ENCODE measurements at regions of chrX and their contacts with region 1.

Region 1: GRCh38 chrX:74614093-74614909 is at the start of gene RLIM:
- DNase-seq: peak; percentile 94
- ATAC-seq: peak; percentile 94
- H3K4me3 Mint-ChIP-seq: peak within 1 kb of the TSS; percentile 97
- H3K27ac Mint-ChIP-seq: peak within 1 kb of the TSS; percentile 99
- H3K4me1 Mint-ChIP-seq: peaks cover 8% of the 10 kb centered on the region
- H3K27me3 Mint-ChIP-seq: no peaks in the 10 kb centered on the region
- total RNA-seq, gene RLIM: 36.5 to 38.2 TPM

Region 2: DNA sequence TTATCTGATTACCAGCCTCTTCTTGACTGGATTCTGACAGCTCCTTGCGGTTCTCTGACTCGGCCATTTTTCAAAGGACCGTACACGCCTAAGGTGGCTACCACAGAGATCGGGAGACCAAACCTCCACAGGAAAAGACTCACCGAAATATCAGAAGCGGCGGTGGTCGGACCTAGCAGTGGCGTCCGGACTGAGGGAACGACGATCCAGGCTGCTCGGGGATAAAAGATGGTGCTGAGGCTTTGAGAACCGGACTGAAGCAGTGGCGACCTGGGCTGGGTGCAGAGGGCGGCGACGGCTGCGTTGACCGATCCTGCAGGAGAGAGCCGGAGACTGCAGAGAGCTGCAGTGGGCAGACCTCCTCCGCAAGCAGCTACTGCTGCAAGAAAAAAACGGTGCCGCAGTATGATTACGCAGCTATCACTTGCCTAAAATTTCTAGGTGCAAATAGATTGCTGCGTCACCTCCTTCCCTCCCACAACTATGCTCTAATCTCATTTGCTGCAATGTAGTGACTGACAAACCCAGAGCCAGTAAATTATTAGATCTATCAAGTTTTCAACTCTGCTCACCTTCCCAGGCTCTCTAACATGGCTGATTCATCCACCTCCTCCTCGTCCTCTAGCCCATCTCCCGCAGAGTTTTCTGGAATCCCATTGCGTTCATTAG is 1399.7 kb before region 1 on chrX and contains the start of gene NAP1L2:
- CTCF ChIA-PET with region 1: no interaction called
- POLR2A ChIA-PET with region 1: no interaction called
- intact Hi-C with region 1: loop called in 1 of 2 experiments (anchors 10 kb)
- DNase-seq: peak; percentile 62
- ATAC-seq: peak; percentile 91
- H3K4me3 Mint-ChIP-seq: peak within 1 kb of the TSS; percentile 92
- H3K27ac Mint-ChIP-seq: peak within 1 kb of the TSS; percentile 89
- H3K4me1 Mint-ChIP-seq: peaks cover 17% of the 10 kb centered on the region
- H3K27me3 Mint-ChIP-seq: peaks cover 2% of the 10 kb centered on the region
- total RNA-seq, gene NAP1L2: 1.9 to 2.9 TPM

Region 3: DNA sequence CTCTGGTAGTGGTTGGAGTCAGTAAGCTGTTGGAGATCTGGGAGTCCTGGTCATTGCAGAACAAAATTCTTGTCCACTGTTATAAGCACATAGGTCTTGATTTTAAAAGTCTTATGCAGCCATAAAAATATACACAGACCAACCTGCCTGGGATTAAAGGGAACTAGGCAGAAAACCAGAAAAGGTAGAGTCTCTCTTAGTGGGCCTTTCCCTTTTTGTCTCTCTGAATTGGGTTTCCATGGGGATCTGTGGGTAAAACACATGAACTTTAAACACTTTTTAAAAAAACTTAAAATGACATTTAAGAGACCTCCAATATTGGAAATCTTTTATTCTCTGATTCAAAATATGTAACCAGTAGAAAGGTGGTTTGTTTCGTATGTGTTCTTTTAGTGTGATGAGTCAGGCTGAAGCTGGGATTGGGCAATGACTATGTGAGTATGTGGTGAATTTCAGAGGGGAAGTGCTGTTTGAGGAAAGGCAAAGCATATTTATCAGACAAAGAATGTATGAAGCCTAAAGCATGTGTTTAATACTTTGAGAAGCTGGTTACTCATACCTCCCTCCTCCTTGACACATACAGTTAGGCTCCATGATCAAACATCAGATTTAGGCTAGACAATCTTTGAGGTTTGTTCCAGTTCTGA is 163.4 kb before region 1 on chrX:
- CTCF ChIA-PET with region 1: no interaction called
- POLR2A ChIA-PET with region 1: no interaction called
- intact Hi-C with region 1: loop called in 1 of 2 experiments (anchors 5 kb)
- DNase-seq: peak; percentile 41
- ATAC-seq: peak; percentile 92
- H3K4me3 Mint-ChIP-seq: no peak overlapping the region
- H3K27ac Mint-ChIP-seq: peak overlapping the region; percentile 65
- H3K4me1 Mint-ChIP-seq: peaks cover 28% of the 10 kb centered on the region
- H3K27me3 Mint-ChIP-seq: no peaks in the 10 kb centered on the region

Region 4: GRCh38 chrX:74579597-74580198 is 34.6 kb before region 1 on chrX:
- CTCF ChIA-PET with region 1: no interaction called
- POLR2A ChIA-PET with region 1: interaction called, 3 read pairs
- intact Hi-C with region 1: loop called in 1 of 2 experiments (anchors 1 kb)
- DNase-seq: no peak
- ATAC-seq: no peak
- H3K4me3 Mint-ChIP-seq: no peak overlapping the region
- H3K27ac Mint-ChIP-seq: peak overlapping the region; percentile 81
- H3K4me1 Mint-ChIP-seq: peaks cover 16% of the 10 kb centered on the region
- H3K27me3 Mint-ChIP-seq: no peaks in the 10 kb centered on the region

Region 5: GRCh38 chrX:74593593-74593992 is 20.7 kb before region 1 on chrX:
- CTCF ChIA-PET with region 1: no interaction called
- POLR2A ChIA-PET with region 1: no interaction called
- intact Hi-C with region 1: no loop called
- DNase-seq: no peak
- ATAC-seq: no peak
- H3K4me3 Mint-ChIP-seq: no peak overlapping the region
- H3K27ac Mint-ChIP-seq: no peak overlapping the region
- H3K4me1 Mint-ChIP-seq: peaks cover 3% of the 10 kb centered on the region
- H3K27me3 Mint-ChIP-seq: no peaks in the 10 kb centered on the region

Region 6: GRCh38 chrX:74924449-74925225 is 310.3 kb after region 1 on chrX:
- CTCF ChIA-PET with region 1: no interaction called
- POLR2A ChIA-PET with region 1: no interaction called
- intact Hi-C with region 1: loop called in 1 of 2 experiments (anchors 10 kb)
- DNase-seq: peak; percentile 60
- ATAC-seq: peak; percentile 72
- H3K4me3 Mint-ChIP-seq: peak overlapping the region; percentile 70
- H3K27ac Mint-ChIP-seq: peak overlapping the region; percentile 40
- H3K4me1 Mint-ChIP-seq: peaks cover 6% of the 10 kb centered on the region
- H3K27me3 Mint-ChIP-seq: peaks cover 15% of the 10 kb centered on the region

Region 7: DNA sequence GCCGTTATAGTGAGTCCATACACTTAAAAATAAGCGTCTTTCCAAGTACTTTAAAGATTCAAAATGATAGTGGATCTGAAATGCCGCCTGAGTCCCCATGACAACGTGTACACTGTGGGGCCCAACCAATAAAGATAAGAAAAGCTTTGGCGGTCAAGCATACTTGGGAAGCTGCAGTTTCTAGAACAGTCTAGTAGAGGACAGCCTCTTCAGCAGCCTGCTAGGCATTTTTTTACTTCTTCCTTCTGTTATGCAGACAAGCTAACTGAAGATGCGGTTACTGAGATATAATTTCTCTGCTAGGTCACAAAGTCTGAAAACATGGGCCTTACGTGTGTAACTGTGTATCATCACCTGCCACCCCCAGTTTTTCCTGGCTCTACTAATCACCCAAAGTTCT is 659.2 kb after region 1 on chrX:
- CTCF ChIA-PET with region 1: interaction called, 4 read pairs
- POLR2A ChIA-PET with region 1: no interaction called
- intact Hi-C with region 1: loop called in 1 of 2 experiments (anchors 1 kb)
- DNase-seq: no peak
- ATAC-seq: no peak
- H3K4me3 Mint-ChIP-seq: peak overlapping the region; percentile 95
- H3K27ac Mint-ChIP-seq: peak overlapping the region; percentile 97
- H3K4me1 Mint-ChIP-seq: peaks cover 26% of the 10 kb centered on the region
- H3K27me3 Mint-ChIP-seq: no peaks in the 10 kb centered on the region

Region 8: DNA sequence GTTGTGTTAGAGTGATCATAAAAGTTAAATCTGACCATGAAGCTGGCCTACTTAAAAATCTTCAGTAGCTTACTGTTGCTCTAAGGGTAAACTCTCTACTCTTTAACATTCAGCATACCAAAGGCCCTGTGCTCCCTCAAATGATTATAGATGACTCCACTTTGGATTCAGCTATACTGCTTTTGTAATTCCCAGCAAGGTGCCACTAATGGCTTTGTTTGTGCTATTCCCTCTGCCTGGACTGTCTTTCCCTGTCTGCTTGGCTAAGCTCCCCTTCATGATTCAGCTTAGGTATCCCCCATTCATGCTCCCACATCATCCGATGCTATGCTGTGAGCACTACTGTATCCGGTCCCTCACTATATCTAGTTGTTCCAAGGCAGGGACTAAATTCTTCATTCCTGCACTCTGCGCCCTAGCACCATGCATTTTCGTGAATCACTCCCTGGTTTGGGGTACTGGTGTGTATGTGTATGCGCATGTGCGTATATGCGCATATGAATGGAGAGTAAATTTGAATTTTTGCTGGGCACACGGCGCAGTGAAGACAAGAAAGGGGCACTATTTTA is 1558.1 kb after region 1 on chrX:
- CTCF ChIA-PET with region 1: no interaction called
- POLR2A ChIA-PET with region 1: no interaction called
- intact Hi-C with region 1: loop called (anchors 5 to 10 kb)
- DNase-seq: no peak
- ATAC-seq: peak; percentile 70
- H3K4me3 Mint-ChIP-seq: peak overlapping the region; percentile 87
- H3K27ac Mint-ChIP-seq: peak overlapping the region; percentile 97
- H3K4me1 Mint-ChIP-seq: peaks cover 49% of the 10 kb centered on the region
- H3K27me3 Mint-ChIP-seq: no peaks in the 10 kb centered on the region